ENCODE measurements at regions of chr17 and their contacts with region 1.

Region 1: DNA sequence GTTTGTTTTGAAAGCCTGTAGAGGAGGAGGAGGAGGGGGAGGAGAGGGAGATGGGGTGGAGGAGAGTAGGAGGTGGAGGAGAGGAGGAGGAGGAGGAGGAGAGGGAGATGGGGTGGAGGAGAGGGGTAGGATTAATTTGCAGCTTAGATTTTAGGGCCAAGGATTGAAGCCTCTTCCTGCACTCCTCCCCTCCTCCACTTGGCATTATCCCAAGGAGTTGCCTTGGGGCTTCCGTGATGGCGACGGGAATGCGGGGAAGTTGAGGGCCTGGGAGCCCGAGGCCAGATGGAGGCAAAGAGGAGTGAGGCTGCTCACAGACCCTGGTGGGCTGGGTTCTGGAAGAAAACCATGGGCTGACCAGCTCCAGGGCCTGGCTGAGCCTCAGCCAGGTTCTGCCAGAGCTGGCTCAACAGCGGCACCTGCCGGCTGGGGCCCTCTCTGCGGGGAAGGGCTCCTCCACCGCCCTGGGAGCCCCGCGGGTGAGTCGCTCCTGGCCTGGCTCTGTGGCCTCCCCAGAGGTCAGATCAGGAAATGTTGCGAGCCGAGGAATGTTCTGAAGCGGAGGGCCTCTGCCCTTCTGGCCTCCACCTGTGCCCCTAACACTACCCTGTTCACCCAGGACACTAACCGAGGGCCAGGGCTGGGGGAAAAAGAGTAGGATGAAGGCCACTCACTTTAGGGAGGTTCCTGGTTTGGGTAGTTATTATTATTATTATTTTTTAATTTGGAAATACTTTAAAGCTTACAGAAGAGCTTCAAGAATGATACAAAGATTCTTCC is 23.9 kb upstream of the FMNL1 start:
- DNase-seq: peak; percentile 95
- ATAC-seq: peak; percentile 100
- H3K4me3 Mint-ChIP-seq: no peak overlapping the region
- H3K27ac Mint-ChIP-seq: no peak overlapping the region
- H3K4me1 Mint-ChIP-seq: peaks cover 2% of the 10 kb centered on the region
- H3K27me3 Mint-ChIP-seq: no peaks in the 10 kb centered on the region

Region 2: GRCh38 chr17:44919885-44920564 is 277.7 kb before region 1 on chr17:
- CTCF ChIA-PET with region 1: interaction called, 5 read pairs
- POLR2A ChIA-PET with region 1: no interaction called
- intact Hi-C with region 1: loop called in 1 of 2 experiments (anchors 10 kb)
- DNase-seq: peak; percentile 85
- ATAC-seq: peak; percentile 93
- H3K4me3 Mint-ChIP-seq: no peak overlapping the region
- H3K27ac Mint-ChIP-seq: no peak overlapping the region
- H3K4me1 Mint-ChIP-seq: no peaks in the 10 kb centered on the region
- H3K27me3 Mint-ChIP-seq: peaks cover 9% of the 10 kb centered on the region

Region 3: GRCh38 chr17:45129426-45129939 is 68.3 kb before region 1 on chr17:
- CTCF ChIA-PET with region 1: interaction called, 201 read pairs
- POLR2A ChIA-PET with region 1: no interaction called
- intact Hi-C with region 1: no loop called
- DNase-seq: no peak
- ATAC-seq: no peak
- H3K4me3 Mint-ChIP-seq: no peak overlapping the region
- H3K27ac Mint-ChIP-seq: no peak overlapping the region
- H3K4me1 Mint-ChIP-seq: peaks cover 2% of the 10 kb centered on the region
- H3K27me3 Mint-ChIP-seq: peaks cover 3% of the 10 kb centered on the region

Region 4: DNA sequence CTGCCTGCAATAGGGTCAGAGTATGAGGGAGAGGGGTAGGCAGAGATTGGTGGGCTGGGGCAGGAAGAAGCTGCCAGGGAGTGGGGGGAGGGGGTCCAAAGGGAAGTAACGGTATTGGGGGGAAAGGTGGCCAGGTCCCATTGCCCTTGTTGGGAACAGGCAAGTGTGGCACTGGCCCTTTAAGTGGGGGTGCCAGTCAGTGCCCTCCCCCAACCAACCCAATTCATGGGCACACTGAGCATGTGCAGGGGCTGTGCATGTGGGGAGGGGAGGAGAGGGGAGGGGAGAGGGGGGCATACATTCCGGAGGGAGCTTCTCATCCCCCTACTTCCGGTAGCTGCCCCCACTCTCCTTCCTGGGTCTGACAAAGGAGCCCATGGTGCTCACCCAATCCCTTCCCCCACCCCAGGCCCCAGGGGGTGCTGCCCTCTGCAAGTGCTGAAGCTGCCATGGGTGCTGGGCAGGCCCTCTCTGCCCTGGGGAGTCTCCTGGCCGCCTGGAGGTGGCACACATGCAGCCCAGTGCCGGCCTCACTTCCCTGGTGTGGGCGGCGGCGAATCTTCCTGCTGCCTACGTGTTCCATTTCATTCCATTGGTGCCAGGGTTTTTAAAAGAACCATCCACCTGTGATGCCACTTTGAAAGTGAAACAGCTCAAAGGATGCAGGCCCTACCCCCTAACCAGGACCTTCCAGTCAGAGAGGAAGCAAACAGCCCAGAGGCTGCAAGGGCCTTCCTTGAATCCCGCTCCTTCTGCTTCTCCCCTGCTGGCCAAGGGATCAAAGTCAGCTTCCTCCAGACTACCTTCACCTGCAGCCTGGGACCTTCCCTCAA is 25.1 kb before region 1 on chr17:
- CTCF ChIA-PET with region 1: interaction called, 14 read pairs
- POLR2A ChIA-PET with region 1: no interaction called
- intact Hi-C with region 1: loop called in 1 of 2 experiments (anchors 2 kb)
- DNase-seq: peak; percentile 81
- ATAC-seq: peak; percentile 88
- H3K4me3 Mint-ChIP-seq: peak overlapping the region; percentile 69
- H3K27ac Mint-ChIP-seq: peak overlapping the region; percentile 85
- H3K4me1 Mint-ChIP-seq: peaks cover 23% of the 10 kb centered on the region
- H3K27me3 Mint-ChIP-seq: no peaks in the 10 kb centered on the region

Region 5: GRCh38 chr17:45235416-45236281 is 37.9 kb after region 1 on chr17:
- CTCF ChIA-PET with region 1: interaction called, 5 read pairs
- POLR2A ChIA-PET with region 1: no interaction called
- intact Hi-C with region 1: loop called in 1 of 2 experiments (anchors 5 kb)
- DNase-seq: peak; percentile 89
- ATAC-seq: peak; percentile 64
- H3K4me3 Mint-ChIP-seq: no peak overlapping the region
- H3K27ac Mint-ChIP-seq: peak overlapping the region; percentile 67
- H3K4me1 Mint-ChIP-seq: peaks cover 60% of the 10 kb centered on the region
- H3K27me3 Mint-ChIP-seq: no peaks in the 10 kb centered on the region

Region 6: GRCh38 chr17:45747911-45748310 is 550.2 kb after region 1 on chr17:
- CTCF ChIA-PET with region 1: no interaction called
- POLR2A ChIA-PET with region 1: no interaction called
- intact Hi-C with region 1: no loop called
- DNase-seq: no peak
- ATAC-seq: no peak
- H3K4me3 Mint-ChIP-seq: no peak overlapping the region
- H3K27ac Mint-ChIP-seq: no peak overlapping the region
- H3K4me1 Mint-ChIP-seq: no peaks in the 10 kb centered on the region
- H3K27me3 Mint-ChIP-seq: peaks cover 8% of the 10 kb centered on the region

Region 7: GRCh38 chr17:45794840-45795239 is 597.1 kb after region 1 on chr17:
- CTCF ChIA-PET with region 1: no interaction called
- POLR2A ChIA-PET with region 1: no interaction called
- intact Hi-C with region 1: no loop called
- DNase-seq: no peak
- ATAC-seq: no peak
- H3K4me3 Mint-ChIP-seq: no peak overlapping the region
- H3K27ac Mint-ChIP-seq: no peak overlapping the region
- H3K4me1 Mint-ChIP-seq: no peaks in the 10 kb centered on the region
- H3K27me3 Mint-ChIP-seq: peaks cover 28% of the 10 kb centered on the region